GM18951 (cell line): ENCODE measurements at regions of chr10 and their contacts with region 1.

Region 1: GRCh38 chr10:34637418-34637911 is 177.6 kb downstream of the PARD3 start:
- POLR2A ChIP-seq: no peak

Region 2: GRCh38 chr10:33841678-33842077 is 795.8 kb before region 1 on chr10:
- in situ Hi-C with region 1: no loop called
- POLR2A ChIP-seq: no peak

Region 3: GRCh38 chr10:34514290-34514689 is 123.2 kb before region 1 on chr10:
- in situ Hi-C with region 1: loop called (anchors 10 kb)
- POLR2A ChIP-seq: no peak